Mammary epithelial cell (primary cell): ENCODE measurements at regions of chr15 and their contacts with region 1.

Region 1: DNA sequence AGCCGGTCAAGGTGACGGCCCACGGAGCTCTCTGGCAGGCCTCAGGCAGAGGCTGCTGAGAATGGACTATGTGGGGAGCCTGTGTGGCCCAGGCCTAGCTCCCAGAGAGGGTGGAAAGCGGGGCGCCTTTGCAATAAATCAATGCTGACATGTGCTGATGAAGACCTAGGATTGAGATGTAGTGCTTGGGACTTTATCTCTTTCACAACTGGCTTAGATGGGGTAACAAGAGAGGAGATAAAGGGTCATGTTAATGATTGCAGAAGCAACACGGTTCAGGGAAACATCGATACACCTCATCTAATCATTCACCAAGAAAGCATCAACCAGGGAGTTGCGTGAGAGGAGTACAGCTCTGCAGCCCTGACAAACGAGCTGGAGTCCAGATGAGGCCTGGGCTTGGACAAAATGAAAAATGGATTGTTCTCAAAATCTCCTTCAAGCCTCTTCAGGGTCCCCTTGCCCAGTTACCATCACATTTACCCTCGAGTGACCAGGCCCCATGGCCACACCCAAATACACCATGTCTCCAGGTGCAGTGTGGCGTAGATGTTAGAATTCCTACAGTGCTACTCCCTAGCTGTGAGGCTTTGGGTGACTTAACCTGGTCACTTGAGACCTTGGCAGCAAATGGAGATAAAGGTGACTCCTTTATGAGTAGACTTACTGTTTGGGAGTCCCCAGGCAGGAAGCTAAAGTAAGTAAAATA is 146.4 kb upstream of the LIPC start:
- DNase-seq: no peak
- H3K4me3 ChIP-seq: no peak overlapping the region
- H3K27ac ChIP-seq: no peak overlapping the region
- H3K4me1 ChIP-seq: peaks cover 17% of the 10 kb centered on the region
- H3K27me3 ChIP-seq: no peaks in the 10 kb centered on the region
- CTCF ChIP-seq: no peak

Region 2: DNA sequence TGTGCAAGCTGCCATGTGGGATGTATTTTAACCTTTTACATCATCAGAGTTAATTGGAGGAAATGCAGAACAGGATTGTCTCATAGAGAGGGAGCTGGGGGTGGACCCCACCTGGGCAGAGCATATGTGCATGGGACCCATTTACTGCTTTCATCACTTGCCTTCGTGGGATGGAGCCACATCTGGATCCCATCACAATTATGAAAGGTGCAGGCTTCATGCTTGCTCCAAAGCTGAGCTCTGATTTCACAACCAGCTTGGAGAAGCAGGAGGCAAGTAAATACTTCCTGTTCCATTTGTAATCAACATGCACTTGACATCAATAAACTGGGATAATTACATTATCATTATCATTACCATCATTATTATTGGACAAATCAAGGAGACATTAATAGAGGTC is 381.7 kb before region 1 on chr15:
- CTCF ChIA-PET with region 1: no interaction called
- dilution Hi-C with region 1: no loop called
- in situ Hi-C with region 1: no loop called
- intact Hi-C with region 1: no loop called
- DNase-seq: no peak
- H3K4me3 ChIP-seq: no peak overlapping the region
- H3K27ac ChIP-seq: no peak overlapping the region
- H3K4me1 ChIP-seq: no peaks in the 10 kb centered on the region
- H3K27me3 ChIP-seq: no peaks in the 10 kb centered on the region
- CTCF ChIP-seq: no peak

Region 3: DNA sequence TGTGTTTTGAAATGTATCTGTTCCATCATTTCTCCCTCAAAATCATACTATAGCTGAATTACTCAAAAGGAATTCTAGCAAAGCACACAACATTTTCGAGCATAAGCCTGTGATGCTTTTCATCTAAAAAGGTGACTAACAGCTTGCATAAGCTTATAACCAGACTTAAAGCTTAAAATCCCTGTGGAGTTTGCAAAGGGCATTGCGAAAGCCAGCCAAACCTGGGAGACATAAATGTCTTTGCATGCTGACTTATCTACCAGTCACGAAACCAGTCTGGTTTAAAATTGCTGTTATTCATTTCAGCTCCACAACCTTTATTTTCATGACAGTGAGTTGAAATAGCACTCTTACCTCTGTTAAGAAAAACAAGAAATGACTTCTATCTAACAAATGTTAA is 110.8 kb after region 1 on chr15:
- CTCF ChIA-PET with region 1: no interaction called
- dilution Hi-C with region 1: no loop called
- in situ Hi-C with region 1: no loop called
- intact Hi-C with region 1: loop called (anchors 5 kb)
- DNase-seq: peak; percentile 92
- H3K4me3 ChIP-seq: no peak overlapping the region
- H3K27ac ChIP-seq: no peak overlapping the region
- H3K4me1 ChIP-seq: peaks cover 28% of the 10 kb centered on the region
- H3K27me3 ChIP-seq: no peaks in the 10 kb centered on the region
- CTCF ChIP-seq: no peak